Head of caudate nucleus (tissue), 42 donors: ENCODE measurements at regions of chr3 and their contacts with region 1.

Region 1: GRCh38 chr3:184185461-184186308 is at the start of gene ABCF3:
- DNase-seq: peak; percentile 96 to 99 (median 98)

Region 2: DNA sequence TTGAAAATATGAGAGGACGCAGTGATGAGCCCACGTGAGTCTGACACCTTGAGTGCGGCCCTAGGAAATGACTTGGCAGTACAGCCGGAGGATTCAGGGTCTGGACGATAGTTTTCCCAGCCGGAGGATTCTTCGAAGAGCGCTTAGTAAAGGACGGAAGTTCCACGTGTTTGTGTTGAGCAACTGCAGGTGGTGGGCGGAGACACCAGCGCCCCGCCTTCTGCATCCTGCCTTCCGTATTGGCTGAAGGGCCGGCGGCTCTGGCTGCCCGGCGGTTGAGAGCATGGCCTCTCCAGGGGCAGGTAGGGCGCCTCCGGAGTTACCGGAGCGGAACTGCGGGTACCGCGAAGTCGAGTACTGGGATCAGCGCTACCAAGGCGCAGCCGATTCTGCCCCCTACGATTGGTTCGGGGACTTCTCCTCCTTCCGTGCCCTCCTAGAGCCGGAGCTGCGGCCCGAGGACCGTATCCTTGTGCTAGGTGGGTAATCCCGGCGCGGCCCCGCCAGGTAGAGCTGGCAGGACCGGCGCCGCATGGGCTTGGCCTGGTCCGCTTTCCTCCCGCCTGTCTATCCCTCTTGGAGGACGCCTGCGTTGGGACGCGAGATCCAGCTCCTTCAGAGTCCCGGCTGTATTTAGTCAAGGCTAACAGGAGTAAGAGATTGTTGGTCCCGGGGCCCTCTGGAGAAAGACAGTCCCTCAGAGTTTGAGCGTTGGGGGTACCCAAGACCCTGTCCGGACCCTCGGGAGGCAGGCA is 63.9 kb after region 1 on chr3 and contains the start of gene EEF1AKMT4:
- intact Hi-C with region 1: loop called (anchors 2 kb)
- DNase-seq: peak; percentile 90 to 98 (median 95)

Region 3: DNA sequence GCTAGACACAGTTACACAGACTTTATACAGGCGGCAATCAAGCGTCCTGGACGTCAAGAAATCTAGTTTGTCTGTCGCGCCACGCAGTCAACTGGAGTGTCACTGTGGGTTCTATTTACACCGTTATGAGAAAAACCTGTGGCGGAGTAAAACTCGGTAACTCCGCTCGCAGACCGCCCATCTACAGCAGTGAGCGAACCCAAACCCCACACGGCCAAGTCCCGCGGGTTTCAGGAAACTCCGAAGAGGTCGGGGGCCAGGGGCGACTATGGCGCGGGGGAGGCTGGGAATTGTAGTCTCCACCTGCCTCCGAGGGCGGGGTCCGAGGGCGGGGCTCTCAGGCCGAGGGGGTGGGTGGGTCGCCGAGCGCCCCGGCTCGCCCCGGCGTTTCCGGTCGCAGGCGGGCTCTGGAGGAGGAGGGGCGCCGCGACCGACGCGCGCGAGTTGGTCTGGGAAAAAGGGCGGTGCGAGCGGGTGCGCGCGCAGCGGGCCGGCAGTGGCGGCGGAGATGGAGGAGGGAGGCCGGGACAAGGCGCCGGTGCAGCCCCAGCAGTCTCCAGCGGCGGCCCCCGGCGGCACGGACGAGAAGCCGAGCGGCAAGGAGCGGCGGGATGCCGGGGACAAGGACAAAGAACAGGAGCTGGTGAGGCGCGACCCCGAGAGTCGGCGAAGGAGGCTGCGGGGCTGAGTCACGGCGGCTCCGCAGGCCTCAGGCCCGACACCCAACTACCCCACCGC is 113.2 kb after region 1 on chr3 and contains the start of gene PSMD2:
- intact Hi-C with region 1: loop called (anchors 1 kb)
- DNase-seq: peak; percentile 94 to 99 (median 98)

Region 4: DNA sequence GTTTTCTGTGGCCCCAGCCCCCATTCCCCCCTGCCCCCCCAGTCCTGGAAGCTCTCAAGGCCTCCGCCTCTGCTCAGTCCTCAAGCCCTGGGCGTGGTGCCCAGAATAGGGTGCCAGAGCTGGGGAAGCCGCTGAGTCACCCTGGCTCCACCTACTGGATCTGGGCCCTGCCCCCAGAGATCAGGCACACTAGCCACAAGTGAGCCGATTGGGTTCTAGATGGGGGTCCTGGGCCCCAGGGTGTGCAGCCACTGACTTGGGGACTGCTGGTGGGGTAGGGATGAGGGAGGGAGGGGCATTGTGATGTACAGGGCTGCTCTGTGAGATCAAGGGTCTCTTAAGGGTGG is 134.4 kb after region 1 on chr3:
- intact Hi-C with region 1: no loop called
- DNase-seq: peak; percentile 88 to 99 (median 96)

Region 5: GRCh38 chr3:184345317-184346144 is 159.8 kb after region 1 on chr3:
- intact Hi-C with region 1: no loop called
- DNase-seq: peak; percentile 74 to 96 (median 89)

Region 6: GRCh38 chr3:184540777-184541681 is 355.3 kb after region 1 on chr3:
- intact Hi-C with region 1: no loop called
- DNase-seq: peak; percentile 52 to 91 (median 79)